ENCODE measurements at regions of chr3 and their contacts with region 1.

Region 1: GRCh38 chr3:32428092-32429068 is 36.7 kb downstream of the CMTM7 start:
- DNase-seq: peak; percentile 41
- H3K4me3 Mint-ChIP-seq: peak overlapping the region; percentile 57
- H3K27ac Mint-ChIP-seq: peak overlapping the region; percentile 84
- H3K4me1 Mint-ChIP-seq: peaks cover 93% of the 10 kb centered on the region
- H3K27me3 Mint-ChIP-seq: no peaks in the 10 kb centered on the region

Region 2: DNA sequence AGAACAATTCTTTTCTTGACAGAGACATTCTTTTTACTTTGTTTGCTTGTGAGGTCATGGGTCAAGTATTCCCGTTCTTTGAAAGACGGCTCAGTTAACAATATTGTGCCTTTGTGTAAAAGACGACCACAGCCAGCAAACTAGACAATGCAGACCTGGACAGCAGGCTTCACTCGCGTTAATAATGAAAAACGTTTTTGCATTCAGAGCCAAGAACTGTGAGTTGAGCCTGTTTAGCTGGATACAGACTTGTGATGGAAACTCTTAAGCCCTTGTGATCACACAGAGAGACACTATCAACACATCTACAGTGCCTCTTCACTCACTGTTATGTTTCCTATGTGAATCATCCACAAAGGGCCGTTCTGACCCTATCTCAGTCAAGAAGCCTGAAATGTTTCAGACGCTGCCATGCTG is 74.0 kb before region 1 on chr3:
- CTCF ChIA-PET with region 1: no interaction called
- POLR2A ChIA-PET with region 1: no interaction called
- intact Hi-C with region 1: no loop called
- DNase-seq: no peak
- H3K4me3 Mint-ChIP-seq: no peak overlapping the region
- H3K27ac Mint-ChIP-seq: no peak overlapping the region
- H3K4me1 Mint-ChIP-seq: peaks cover under 1% of the 10 kb centered on the region
- H3K27me3 Mint-ChIP-seq: no peaks in the 10 kb centered on the region

Region 3: GRCh38 chr3:32374788-32375595 is 53.4 kb before region 1 on chr3:
- CTCF ChIA-PET with region 1: interaction called, 12 read pairs
- POLR2A ChIA-PET with region 1: interaction called, 3 read pairs
- intact Hi-C with region 1: no loop called
- DNase-seq: peak; percentile 67
- H3K4me3 Mint-ChIP-seq: peak overlapping the region; percentile 5
- H3K27ac Mint-ChIP-seq: peak overlapping the region; percentile 53
- H3K4me1 Mint-ChIP-seq: peaks cover 23% of the 10 kb centered on the region
- H3K27me3 Mint-ChIP-seq: no peaks in the 10 kb centered on the region

Region 4: GRCh38 chr3:32401556-32402081 is 26.8 kb before region 1 on chr3:
- CTCF ChIA-PET with region 1: interaction called, 4 read pairs
- POLR2A ChIA-PET with region 1: no interaction called
- intact Hi-C with region 1: loop called (anchors 2 kb)
- DNase-seq: peak; percentile 74
- H3K4me3 Mint-ChIP-seq: peak overlapping the region; percentile 85
- H3K27ac Mint-ChIP-seq: peak overlapping the region; percentile 99
- H3K4me1 Mint-ChIP-seq: peaks cover 58% of the 10 kb centered on the region
- H3K27me3 Mint-ChIP-seq: no peaks in the 10 kb centered on the region

Region 5: DNA sequence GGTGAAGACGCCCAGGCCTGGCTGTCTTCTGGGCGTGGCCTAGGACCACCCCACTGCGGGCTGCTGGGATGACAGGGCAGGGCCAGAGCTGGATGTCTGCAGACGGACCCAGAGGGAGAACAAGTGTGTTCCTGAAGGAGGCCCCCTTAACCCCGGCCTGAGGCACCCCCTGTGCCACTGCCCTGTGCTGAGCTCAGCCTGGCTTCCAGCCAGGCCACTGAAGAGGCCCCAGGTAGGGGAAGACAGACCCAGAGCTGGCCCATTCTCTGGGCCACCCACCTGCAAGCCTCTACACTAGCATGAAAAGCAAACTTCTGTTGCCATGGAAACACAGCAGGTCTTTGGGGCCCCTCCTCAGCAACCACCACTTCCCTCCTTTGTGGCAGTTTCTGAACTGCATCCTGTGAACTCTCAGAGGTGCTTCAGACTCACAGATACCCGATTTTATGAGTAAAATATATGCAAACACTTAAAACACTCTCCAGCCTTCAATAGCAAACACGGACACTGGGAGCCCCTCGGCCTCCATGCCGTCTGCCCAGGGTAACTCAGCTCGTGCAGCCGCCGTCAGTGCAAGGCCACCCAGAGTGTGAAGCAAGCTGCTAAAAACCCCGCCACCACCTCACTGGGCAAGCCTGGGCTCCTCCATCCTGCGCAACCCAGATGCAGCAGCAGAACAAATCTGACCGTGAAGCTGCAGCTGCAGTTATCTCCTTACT is 31.8 kb after region 1 on chr3:
- CTCF ChIA-PET with region 1: interaction called, 3 read pairs
- POLR2A ChIA-PET with region 1: interaction called, 9 read pairs
- intact Hi-C with region 1: loop called (anchors 1 kb)
- DNase-seq: peak; percentile 86
- H3K4me3 Mint-ChIP-seq: peak overlapping the region; percentile 63
- H3K27ac Mint-ChIP-seq: no peak overlapping the region
- H3K4me1 Mint-ChIP-seq: peaks cover 31% of the 10 kb centered on the region
- H3K27me3 Mint-ChIP-seq: no peaks in the 10 kb centered on the region

Region 6: GRCh38 chr3:32502118-32502945 is 74.0 kb after region 1 on chr3 and contains the start of gene CMTM6:
- CTCF ChIA-PET with region 1: no interaction called
- POLR2A ChIA-PET with region 1: interaction called, 3 read pairs
- intact Hi-C with region 1: loop called (anchors 2 kb)
- DNase-seq: peak; percentile 84
- H3K4me3 Mint-ChIP-seq: peak within 1 kb of the TSS; percentile 100
- H3K27ac Mint-ChIP-seq: peak within 1 kb of the TSS; percentile 97
- H3K4me1 Mint-ChIP-seq: peaks cover 32% of the 10 kb centered on the region
- H3K27me3 Mint-ChIP-seq: no peaks in the 10 kb centered on the region
- total RNA-seq, gene CMTM6: 87.7 to 89.1 TPM